PC-9 (cell line): ENCODE measurements at regions of chr17 and their contacts with region 1.

Region 1: DNA sequence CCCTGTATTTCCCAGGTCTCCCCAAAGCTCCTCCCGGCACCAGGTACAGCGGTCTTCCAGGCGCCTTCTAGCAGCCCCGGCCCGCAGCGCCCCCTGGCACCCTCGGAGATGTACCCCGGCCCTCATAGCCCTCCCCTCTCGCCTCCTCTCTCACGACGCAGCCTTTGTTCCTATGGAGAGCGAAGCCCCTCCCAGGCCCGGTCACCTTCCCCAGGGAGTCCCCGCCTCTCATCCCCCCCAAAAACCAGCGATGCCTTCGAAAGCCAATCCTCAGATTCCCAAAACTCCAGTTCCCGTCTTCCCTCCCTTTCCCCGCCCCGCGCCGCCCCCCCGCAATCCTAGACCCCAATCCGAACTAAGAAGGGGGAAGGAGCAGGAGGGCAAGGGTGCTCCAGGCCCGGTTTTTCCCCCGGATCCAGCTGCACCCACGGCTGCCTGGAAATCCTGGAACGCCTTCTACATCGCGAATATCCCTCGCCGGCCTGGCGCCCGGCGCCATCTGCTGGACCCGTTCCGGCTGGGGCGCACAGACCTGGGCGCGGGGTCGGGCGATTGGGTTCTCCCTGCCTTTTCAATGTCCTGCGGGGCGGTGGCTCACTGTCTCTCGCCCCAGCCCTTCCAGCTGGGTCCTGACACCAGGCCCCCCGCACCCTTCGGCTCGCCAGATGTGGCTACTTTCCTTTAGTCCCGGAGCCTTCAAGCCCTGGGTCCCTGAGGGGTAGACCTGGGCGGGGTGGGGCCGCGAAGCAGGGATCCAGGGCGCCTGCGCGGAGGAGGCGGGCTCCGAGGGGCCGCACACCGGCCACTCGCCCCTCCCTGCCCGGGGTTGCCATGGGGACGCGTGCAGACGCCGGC is at the start of gene DNAH2:
- DNase-seq: peak; percentile 71 to 91
- H3K4me3 ChIP-seq: peak within 1 kb of the TSS; percentile 67
- H3K27ac ChIP-seq: no peak within 1 kb of the TSS
- H3K4me1 ChIP-seq: peaks cover 7% of the 10 kb centered on the region
- H3K27me3 ChIP-seq: no peaks in the 10 kb centered on the region
- CTCF ChIP-seq: peak; percentile 50
- total RNA-seq, gene DNAH2: 10.6 and 11.6 TPM in 2 replicates

Region 2: DNA sequence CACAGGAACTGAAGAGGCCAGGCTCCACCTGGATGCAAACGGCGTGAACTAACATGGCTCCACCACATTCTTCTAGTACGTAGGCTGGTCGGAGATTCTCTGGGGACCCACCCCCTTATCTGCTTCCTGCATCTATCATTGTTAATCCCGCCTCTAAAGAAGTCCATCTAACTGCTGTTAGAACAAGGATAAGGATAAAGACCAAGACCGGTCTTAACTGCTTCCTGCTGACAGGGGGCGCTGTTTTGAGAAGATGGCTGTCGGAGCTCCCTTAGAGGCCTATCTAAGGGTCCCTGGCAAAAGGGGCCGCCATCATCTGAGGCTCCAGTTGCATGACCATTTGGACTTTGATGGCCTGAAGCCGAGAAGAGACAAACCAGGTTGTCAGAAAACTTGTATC is 194.1 kb before region 1 on chr17:
- CTCF ChIA-PET with region 1: interaction called, 11 read pairs
- POLR2A ChIA-PET with region 1: no interaction called
- intact Hi-C with region 1: no loop called
- DNase-seq: no peak
- H3K4me3 ChIP-seq: no peak overlapping the region
- H3K27ac ChIP-seq: no peak overlapping the region
- H3K4me1 ChIP-seq: no peaks in the 10 kb centered on the region
- H3K27me3 ChIP-seq: no peaks in the 10 kb centered on the region
- CTCF ChIP-seq: peak; percentile 52

Region 3: GRCh38 chr17:7632492-7632894 is 84.6 kb before region 1 on chr17:
- CTCF ChIA-PET with region 1: interaction called, 15 read pairs
- POLR2A ChIA-PET with region 1: no interaction called
- intact Hi-C with region 1: no loop called
- DNase-seq: peak in 1 of 2 experiments; percentile 38
- H3K4me3 ChIP-seq: no peak overlapping the region
- H3K27ac ChIP-seq: no peak overlapping the region
- H3K4me1 ChIP-seq: no peaks in the 10 kb centered on the region
- H3K27me3 ChIP-seq: no peaks in the 10 kb centered on the region
- CTCF ChIP-seq: peak; percentile 54; the same call in 1 of the 2 replicates

Region 4: GRCh38 chr17:7803981-7804380 is 86.9 kb after region 1 on chr17:
- CTCF ChIA-PET with region 1: interaction called, 11 read pairs
- POLR2A ChIA-PET with region 1: no interaction called
- intact Hi-C with region 1: no loop called
- DNase-seq: peak in 1 of 2 experiments; percentile 12
- H3K4me3 ChIP-seq: no peak overlapping the region
- H3K27ac ChIP-seq: no peak overlapping the region
- H3K4me1 ChIP-seq: peaks cover 17% of the 10 kb centered on the region
- H3K27me3 ChIP-seq: no peaks in the 10 kb centered on the region
- CTCF ChIP-seq: no peak

Region 5: DNA sequence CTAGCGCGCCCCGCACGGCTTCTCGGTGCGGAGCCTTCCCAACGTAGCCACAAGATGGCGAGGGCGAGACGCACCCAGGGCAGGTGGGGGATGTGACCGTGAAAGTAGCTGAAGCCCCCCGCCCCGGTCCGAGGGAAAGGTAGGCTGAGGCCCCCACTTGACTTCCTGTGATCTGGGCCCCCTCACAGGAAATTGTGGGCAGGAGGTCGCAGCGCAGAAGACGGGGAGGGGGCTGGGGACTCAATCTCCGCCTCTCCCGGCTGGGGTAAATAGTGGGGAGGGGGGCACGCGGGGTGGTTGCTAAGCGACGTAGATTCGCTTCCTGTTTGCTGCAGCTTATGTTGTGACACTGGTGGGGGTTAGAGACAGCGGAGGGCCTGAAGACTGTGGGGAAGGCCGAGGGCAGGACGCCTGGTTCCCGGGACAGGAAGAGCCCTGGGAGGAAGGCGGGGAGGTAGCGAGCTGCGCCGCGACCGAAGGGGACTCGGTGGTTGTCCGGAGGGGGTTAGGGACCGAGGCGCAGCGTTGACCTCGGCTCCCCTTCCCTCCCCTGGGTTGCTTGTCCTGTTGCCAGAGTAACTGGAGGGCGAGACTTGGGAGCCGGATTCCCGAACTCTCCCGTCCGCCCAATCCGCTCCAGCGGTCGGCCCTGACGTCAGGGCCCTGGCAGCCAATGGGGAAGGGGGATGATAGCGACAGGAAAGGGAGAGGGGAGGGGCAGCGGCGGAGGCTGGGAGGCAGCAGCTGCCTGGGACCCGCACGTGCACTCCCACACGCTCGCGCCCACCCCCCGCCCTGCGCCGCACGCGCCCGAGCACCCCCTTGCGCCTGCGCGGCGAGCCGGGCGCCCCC is 118.1 kb after region 1 on chr17:
- CTCF ChIA-PET with region 1: interaction called, 32 read pairs
- POLR2A ChIA-PET with region 1: interaction called, 10 read pairs
- intact Hi-C with region 1: no loop called
- DNase-seq: peak; percentile 84 to 96
- H3K4me3 ChIP-seq: peak overlapping the region; percentile 82
- H3K27ac ChIP-seq: 0 out of 2 replicates have a peak overlapping the region, but pooled peaks have one; percentile 23
- H3K4me1 ChIP-seq: peaks cover 18% of the 10 kb centered on the region
- H3K27me3 ChIP-seq: no peaks in the 10 kb centered on the region
- CTCF ChIP-seq: peak; percentile 63; the same call in 1 of the 2 replicates